ENCODE measurements at regions of chr14 and their contacts with region 1.

Region 1: DNA sequence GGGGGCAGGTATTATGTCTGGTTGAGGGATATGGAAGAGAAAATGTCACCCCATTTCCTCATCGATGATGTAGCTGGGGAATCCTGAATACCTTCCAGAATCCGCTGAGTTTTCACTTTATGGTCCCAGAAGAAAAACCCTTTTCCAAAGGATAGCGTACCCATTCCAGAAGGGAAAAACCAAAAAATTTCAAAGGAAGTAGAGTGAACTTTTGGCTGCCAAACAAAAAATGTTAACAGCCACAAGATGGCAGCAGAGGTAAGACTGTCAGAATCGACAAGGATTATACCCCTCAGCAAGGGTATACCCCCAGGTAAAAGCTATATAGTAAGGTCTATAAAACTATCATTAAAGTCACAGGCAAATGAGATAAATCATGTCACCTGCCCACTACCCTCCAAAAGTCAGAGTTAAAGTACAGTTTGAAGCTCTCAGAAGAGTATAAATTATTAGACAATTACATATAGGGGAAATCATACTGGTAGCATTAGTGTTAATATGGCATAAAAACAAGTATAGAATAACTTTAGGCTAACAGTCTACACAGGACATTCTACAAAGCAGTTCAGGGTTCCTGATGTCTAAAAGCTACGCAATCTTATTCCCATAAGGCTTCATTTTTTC is 18.0 kb downstream of the ACIN1 start:
- DNase-seq: peak; percentile 39
- ATAC-seq: peak; percentile 70
- H3K4me3 Mint-ChIP-seq: no peak overlapping the region
- H3K27ac Mint-ChIP-seq: no peak overlapping the region
- H3K4me1 Mint-ChIP-seq: peaks cover 9% of the 10 kb centered on the region
- H3K27me3 Mint-ChIP-seq: no peaks in the 10 kb centered on the region
- CTCF ChIP-seq: peak; percentile 70

Region 2: GRCh38 chr14:23095196-23096108 is 18.6 kb after region 1 on chr14 and contains the start of gene C14orf119:
- CTCF ChIA-PET with region 1: interaction called, 84 read pairs
- POLR2A ChIA-PET with region 1: interaction called, 12 read pairs
- intact Hi-C with region 1: no loop called
- DNase-seq: peak; percentile 100
- ATAC-seq: peak; percentile 91
- H3K4me3 Mint-ChIP-seq: no peak within 1 kb of the TSS
- H3K27ac Mint-ChIP-seq: no peak within 1 kb of the TSS
- H3K4me1 Mint-ChIP-seq: peaks cover 34% of the 10 kb centered on the region
- H3K27me3 Mint-ChIP-seq: no peaks in the 10 kb centered on the region
- CTCF ChIP-seq: no peak
- total RNA-seq, gene C14orf119: 49.2 to 51.1 TPM

Region 3: DNA sequence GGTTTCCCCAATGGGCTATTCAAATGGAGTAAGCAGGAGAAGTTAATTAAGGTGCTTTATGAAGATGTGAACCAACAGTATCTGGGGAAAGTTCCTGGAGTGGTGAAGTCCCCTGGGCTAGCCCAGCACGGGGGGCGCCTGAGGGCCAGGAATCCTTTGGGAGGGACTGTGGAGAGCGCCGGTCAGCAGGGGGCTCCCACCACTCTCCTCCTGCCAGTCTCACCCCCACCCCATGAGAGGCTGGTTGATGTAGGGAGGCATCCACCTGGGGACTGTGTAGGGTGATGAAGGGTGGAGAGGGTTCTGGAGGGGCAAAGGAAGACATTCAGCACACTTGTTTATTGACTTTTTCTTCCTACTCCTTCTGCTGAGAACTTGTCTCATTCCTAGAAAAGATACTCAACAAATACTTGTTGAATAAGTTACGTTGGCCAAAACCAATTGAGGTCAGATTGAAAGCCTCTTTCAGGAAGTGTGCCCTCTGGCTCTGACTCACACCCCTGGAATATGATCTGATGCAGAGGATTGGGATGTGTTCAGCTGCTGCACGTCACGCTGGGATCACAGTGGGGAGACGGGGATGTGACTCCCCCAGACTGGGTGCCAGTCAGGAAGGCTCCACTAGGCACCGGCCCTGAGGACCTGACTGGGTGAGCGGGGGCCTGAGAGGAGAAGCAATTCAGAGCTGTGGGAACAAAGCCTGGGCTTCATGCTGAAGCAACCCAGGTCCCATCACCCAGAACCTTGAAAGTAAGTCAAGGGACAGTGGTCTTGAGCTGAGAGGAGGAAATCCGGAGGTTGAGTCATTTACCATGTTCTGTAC is 38.0 kb after region 1 on chr14:
- CTCF ChIA-PET with region 1: interaction called, 35 read pairs
- POLR2A ChIA-PET with region 1: no interaction called
- intact Hi-C with region 1: no loop called
- DNase-seq: no peak
- ATAC-seq: no peak
- H3K4me3 Mint-ChIP-seq: no peak overlapping the region
- H3K27ac Mint-ChIP-seq: no peak overlapping the region
- H3K4me1 Mint-ChIP-seq: peaks cover 30% of the 10 kb centered on the region
- H3K27me3 Mint-ChIP-seq: no peaks in the 10 kb centered on the region
- CTCF ChIP-seq: no peak

Region 4: DNA sequence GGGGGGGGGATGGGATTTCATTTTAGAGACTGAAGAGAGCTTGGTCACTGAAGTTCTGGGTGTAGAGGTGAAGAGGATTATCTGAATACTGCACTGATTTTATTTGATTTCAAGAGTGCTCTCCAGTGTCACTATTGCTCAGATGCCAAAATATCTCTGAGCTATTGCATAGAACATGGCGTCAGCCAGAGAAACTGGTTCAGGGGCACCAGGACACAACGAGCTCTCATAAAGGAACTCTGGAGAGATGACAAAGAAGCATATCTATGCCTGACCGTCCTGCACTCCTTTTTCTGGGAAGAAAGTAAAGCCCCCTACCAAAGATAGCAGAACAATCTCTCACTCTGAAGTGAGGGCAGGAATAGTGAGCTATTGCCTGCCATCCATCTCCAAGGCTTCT is 104.6 kb after region 1 on chr14:
- CTCF ChIA-PET with region 1: interaction called, 28 read pairs
- POLR2A ChIA-PET with region 1: interaction called, 3 read pairs
- intact Hi-C with region 1: no loop called
- DNase-seq: no peak
- ATAC-seq: no peak
- H3K4me3 Mint-ChIP-seq: no peak overlapping the region
- H3K27ac Mint-ChIP-seq: no peak overlapping the region
- H3K4me1 Mint-ChIP-seq: peaks cover 16% of the 10 kb centered on the region
- H3K27me3 Mint-ChIP-seq: peaks cover 8% of the 10 kb centered on the region
- CTCF ChIP-seq: no peak